ENCODE measurements at regions of chr18 and their contacts with region 1.

Region 1: DNA sequence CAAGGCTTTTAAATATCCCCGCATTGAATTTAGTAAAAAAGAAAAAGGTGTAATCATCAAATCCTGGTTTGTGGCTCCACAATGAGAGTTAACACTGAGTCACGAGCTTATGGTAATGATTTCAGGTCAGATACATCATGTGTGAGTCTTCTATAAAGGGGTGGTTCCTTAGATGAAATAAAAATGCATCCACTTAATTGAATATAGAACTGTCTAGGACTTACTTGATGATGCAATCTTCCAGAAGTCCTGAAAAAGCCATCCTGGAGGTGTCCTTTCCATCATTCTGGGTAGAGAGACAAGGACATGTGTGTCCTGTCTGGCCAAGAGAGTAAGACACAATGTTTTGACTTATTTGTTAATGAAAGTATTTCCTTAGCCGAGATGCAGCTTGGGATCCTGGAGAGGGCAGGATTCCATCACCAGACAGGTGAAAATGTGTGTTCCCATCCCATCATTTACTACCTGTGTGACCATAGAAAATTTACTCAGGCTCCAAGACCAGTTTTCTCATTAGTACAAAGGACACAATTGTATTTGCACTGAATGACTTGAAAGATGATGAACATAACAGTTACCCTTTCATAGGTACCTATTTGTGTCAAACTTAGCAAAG is 1539.8 kb upstream of the PIK3C3 start:
- DNase-seq: no peak
- ATAC-seq: no peak
- H3K4me3 ChIP-seq: no peak overlapping the region
- H3K4me3 Mint-ChIP-seq: no peak overlapping the region
- H3K27ac ChIP-seq: no peak overlapping the region
- H3K27ac Mint-ChIP-seq: no peak overlapping the region
- H3K4me1 ChIP-seq: no peaks in the 10 kb centered on the region
- H3K4me1 Mint-ChIP-seq: no peaks in the 10 kb centered on the region
- H3K27me3 ChIP-seq: no peaks in the 10 kb centered on the region
- H3K27me3 Mint-ChIP-seq: no peaks in the 10 kb centered on the region
- CTCF ChIP-seq: no peak

Region 2: GRCh38 chr18:40365526-40365925 is 49.8 kb before region 1 on chr18:
- CTCF ChIA-PET with region 1: no interaction called
- POLR2A ChIA-PET with region 1: no interaction called
- intact Hi-C with region 1: loop called in 1 of 2 experiments (anchors 5 kb)
- DNase-seq: no peak
- ATAC-seq: no peak
- H3K4me3 ChIP-seq: no peak overlapping the region
- H3K4me3 Mint-ChIP-seq: no peak overlapping the region
- H3K27ac ChIP-seq: no peak overlapping the region
- H3K27ac Mint-ChIP-seq: no peak overlapping the region
- H3K4me1 ChIP-seq: no peaks in the 10 kb centered on the region
- H3K4me1 Mint-ChIP-seq: no peaks in the 10 kb centered on the region
- H3K27me3 ChIP-seq: no peaks in the 10 kb centered on the region
- H3K27me3 Mint-ChIP-seq: no peaks in the 10 kb centered on the region
- CTCF ChIP-seq: no peak

Region 3: GRCh38 chr18:40402052-40402451 is 13.2 kb before region 1 on chr18:
- CTCF ChIA-PET with region 1: no interaction called
- POLR2A ChIA-PET with region 1: no interaction called
- intact Hi-C with region 1: no loop called
- DNase-seq: no peak
- ATAC-seq: no peak
- H3K4me3 ChIP-seq: no peak overlapping the region
- H3K4me3 Mint-ChIP-seq: no peak overlapping the region
- H3K27ac ChIP-seq: no peak overlapping the region
- H3K27ac Mint-ChIP-seq: no peak overlapping the region
- H3K4me1 ChIP-seq: no peaks in the 10 kb centered on the region
- H3K4me1 Mint-ChIP-seq: no peaks in the 10 kb centered on the region
- H3K27me3 ChIP-seq: no peaks in the 10 kb centered on the region
- H3K27me3 Mint-ChIP-seq: no peaks in the 10 kb centered on the region
- CTCF ChIP-seq: no peak